ENCODE measurements at regions of chr5 and their contacts with region 1.

Region 1: DNA sequence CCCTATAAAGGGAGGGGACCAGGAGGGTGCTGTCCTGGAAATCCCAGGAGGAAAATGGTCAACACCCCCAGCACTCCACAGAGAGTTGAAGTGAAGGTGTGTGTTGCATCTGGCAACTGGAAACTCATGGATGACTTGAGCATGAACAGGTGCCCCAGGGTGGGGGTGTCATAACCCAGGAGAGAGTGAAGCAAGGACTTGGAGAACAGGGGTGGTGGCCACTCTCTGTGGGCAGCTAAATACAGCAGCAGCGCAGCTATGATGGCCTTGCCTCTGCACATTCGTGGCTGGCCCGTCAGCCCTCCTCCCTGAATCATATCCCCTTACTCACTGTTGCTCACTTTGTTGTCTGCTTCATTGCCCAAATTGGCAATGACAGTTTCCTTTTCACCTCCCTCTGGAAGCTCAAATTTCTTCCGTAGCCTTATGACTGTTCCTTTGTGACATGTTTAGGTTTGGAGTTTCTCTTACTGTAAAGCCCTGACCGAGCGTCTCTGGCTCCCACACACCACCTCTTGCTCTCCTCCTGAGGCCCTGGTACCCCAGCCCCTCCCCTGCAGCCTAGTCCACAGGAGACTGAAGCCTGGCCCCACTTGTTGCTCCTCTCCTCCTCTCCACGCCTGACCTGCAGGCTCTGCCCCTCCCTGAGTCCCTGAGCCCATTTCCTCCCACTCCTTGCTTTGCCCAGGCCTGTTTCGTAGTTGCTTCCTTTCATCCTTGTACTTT is 185.8 kb downstream of the CD180 start:
- DNase-seq: no peak
- ATAC-seq: peak in 6 of 8 donors; percentile 6 to 56 (median 38)
- H3K4me3 ChIP-seq: peak overlapping the region in 2 of 10 donors; percentile 8 to 12
- H3K27ac ChIP-seq: peak overlapping the region in 9 of 10 donors; percentile 1 to 85 (median 59)
- H3K4me1 ChIP-seq: peaks cover 12 to 99% (median 84%) of the 10 kb centered on the region in 9 donors
- H3K27me3 ChIP-seq: no peaks in the 10 kb centered on the region
- CTCF ChIP-seq: no peak

Region 2: GRCh38 chr5:67030289-67031056 is 19.6 kb after region 1 on chr5:
- intact Hi-C with region 1: loop called in 1 of 10 experiments (anchors 2 kb)
- DNase-seq: no peak
- ATAC-seq: no peak
- H3K4me3 ChIP-seq: no peak overlapping the region
- H3K27ac ChIP-seq: peak overlapping the region in 7 of 10 donors; percentile 11 to 62 (median 35)
- H3K4me1 ChIP-seq: peaks cover 10 to 82% (median 67%) of the 10 kb centered on the region in 9 donors
- H3K27me3 ChIP-seq: no peaks in the 10 kb centered on the region
- CTCF ChIP-seq: no peak

Region 3: GRCh38 chr5:67050136-67050535 is 39.3 kb after region 1 on chr5:
- intact Hi-C with region 1: loop called in 2 of 10 experiments (anchors 5 kb)
- DNase-seq: no peak
- ATAC-seq: no peak
- H3K4me3 ChIP-seq: no peak overlapping the region
- H3K27ac ChIP-seq: peak overlapping the region in 9 of 10 donors; percentile 23 to 64 (median 48)
- H3K4me1 ChIP-seq: peaks cover 6 to 84% (median 52%) of the 10 kb centered on the region in 9 donors
- H3K27me3 ChIP-seq: no peaks in the 10 kb centered on the region
- CTCF ChIP-seq: no peak

Region 4: DNA sequence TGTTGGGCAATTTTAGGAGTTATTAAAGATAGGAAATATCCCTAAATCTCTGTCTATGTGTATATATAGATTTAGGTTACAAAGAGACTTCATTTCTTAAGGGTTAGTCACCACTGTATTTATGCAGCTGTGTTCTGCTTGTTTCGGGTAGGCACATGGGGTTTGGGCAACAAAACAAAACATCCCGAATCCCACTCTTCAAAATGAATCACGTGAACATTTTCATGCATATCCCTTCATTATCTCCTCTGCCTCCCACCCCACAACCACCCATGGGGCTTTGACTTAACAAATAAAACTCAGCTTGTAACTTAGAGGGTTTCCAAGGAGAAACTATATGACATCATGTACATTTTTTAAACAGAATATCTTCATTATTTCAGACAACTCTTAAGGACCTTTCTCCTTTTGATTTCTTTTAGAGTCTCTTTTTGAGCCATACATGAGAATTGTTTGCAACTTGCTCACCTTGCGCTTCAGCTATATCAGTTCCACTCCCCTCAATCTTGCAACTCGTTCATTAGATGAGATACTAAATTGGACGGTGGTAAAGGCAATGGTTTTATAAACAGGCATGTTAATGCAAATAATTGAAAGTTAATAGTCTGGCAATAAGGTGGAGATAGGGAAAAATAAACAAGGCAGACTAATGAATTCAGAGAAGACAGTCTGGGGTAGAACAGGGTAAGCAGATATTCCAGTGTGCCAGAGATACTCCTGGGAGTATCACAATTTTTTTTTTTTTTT is 49.1 kb after region 1 on chr5:
- intact Hi-C with region 1: loop called in 1 of 10 experiments (anchors 5 kb)
- DNase-seq: no peak
- ATAC-seq: no peak
- H3K4me3 ChIP-seq: no peak overlapping the region
- H3K27ac ChIP-seq: peak overlapping the region in 3 of 10 donors; percentile 39 to 48 (median 45)
- H3K4me1 ChIP-seq: peaks cover 0 to 80% (median 43%) of the 10 kb centered on the region in 9 donors
- H3K27me3 ChIP-seq: no peaks in the 10 kb centered on the region
- CTCF ChIP-seq: no peak